Aorta (tissue), 5 donors: ENCODE measurements at regions of chr16 and their contacts with region 1.

Region 1: DNA sequence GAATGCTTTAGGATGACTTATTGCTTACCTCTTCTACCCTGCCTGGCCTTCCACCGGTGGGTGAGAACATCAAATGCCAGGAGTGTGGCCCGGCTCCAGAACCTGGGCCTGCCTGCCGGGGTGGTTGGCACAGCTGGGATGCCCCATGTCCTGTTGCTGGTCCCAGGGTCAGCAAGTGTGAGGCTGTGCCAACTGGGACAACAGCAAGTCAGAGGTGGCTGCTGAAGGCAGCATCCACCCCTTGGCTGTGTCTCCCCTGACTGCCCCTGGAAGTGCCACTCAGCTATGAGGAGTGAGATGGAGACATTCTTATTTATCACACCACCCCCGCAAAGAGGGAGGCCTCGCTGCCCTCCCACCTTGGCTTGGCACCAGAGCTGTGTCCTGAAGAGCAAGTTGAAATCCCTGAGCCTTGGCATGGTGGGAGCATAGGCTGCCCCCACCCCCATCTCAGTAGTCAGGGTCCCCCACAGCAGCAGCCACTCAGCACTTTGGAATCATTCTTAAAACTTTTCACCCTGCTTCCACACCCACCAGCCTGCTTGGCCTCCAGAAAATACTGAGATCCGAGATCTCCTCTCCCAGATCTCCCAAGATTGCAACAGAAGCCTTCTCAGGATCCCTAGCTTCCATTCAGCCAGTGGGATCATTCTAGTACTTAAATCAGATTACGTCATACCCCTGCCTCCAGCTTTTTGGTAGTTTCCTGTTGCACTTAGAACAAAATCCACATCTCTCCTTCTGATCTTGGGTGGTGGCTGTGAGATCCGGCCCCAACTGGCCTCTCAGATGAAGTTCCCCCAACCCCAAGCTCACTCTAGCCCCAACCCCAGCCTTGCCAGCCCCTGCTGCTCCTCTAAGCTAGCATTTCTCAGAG is 127.5 kb downstream of the SOCS1 start:
- DNase-seq: no peak
- ATAC-seq: no peak
- H3K4me3 ChIP-seq: no peak overlapping the region
- H3K27ac ChIP-seq: no peak overlapping the region
- H3K4me1 ChIP-seq: peaks cover 2 to 3% of the 10 kb centered on the region in 2 donors
- H3K27me3 ChIP-seq: no peaks in the 10 kb centered on the region

Region 2: GRCh38 chr16:11164482-11165270 is 36.2 kb after region 1 on chr16:
- intact Hi-C with region 1: loop called in 1 of 2 experiments (anchors 5 kb)
- DNase-seq: no peak
- ATAC-seq: no peak
- H3K4me3 ChIP-seq: no peak overlapping the region
- H3K27ac ChIP-seq: no peak overlapping the region
- H3K4me1 ChIP-seq: peaks cover 8 to 11% of the 10 kb centered on the region in 2 donors
- H3K27me3 ChIP-seq: no peaks in the 10 kb centered on the region